ENCODE measurements at regions of chr14 and their contacts with region 1.

Region 1: GRCh38 chr14:70972107-70972976 is 65.1 kb downstream of the PCNX1 start:
- DNase-seq: peak; percentile 87
- H3K4me3 ChIP-seq: no peak overlapping the region
- H3K27ac ChIP-seq: no peak overlapping the region
- H3K4me1 ChIP-seq: no peaks in the 10 kb centered on the region
- H3K27me3 ChIP-seq: no peaks in the 10 kb centered on the region
- CTCF ChIP-seq: peak; percentile 87

Region 2: GRCh38 chr14:70821584-70822529 is 150.5 kb before region 1 on chr14:
- intact Hi-C with region 1: loop called (anchors 2 kb)
- DNase-seq: peak; percentile 45
- H3K4me3 ChIP-seq: peak overlapping the region; percentile 39
- H3K27ac ChIP-seq: no peak overlapping the region
- H3K4me1 ChIP-seq: peaks cover 8% of the 10 kb centered on the region
- H3K27me3 ChIP-seq: peaks cover 12% of the 10 kb centered on the region
- CTCF ChIP-seq: no peak

Region 3: GRCh38 chr14:70907176-70907995 is 65.0 kb before region 1 on chr14 and contains the start of gene PCNX1:
- intact Hi-C with region 1: loop called (anchors 5 kb)
- DNase-seq: peak; percentile 87
- H3K4me3 ChIP-seq: peak within 1 kb of the TSS; percentile 86
- H3K27ac ChIP-seq: peak within 1 kb of the TSS; percentile 94
- H3K4me1 ChIP-seq: peaks cover 4% of the 10 kb centered on the region
- H3K27me3 ChIP-seq: no peaks in the 10 kb centered on the region
- CTCF ChIP-seq: peak; percentile 91
- total RNA-seq, gene PCNX1: 18.1 to 26.7 TPM

Region 4: DNA sequence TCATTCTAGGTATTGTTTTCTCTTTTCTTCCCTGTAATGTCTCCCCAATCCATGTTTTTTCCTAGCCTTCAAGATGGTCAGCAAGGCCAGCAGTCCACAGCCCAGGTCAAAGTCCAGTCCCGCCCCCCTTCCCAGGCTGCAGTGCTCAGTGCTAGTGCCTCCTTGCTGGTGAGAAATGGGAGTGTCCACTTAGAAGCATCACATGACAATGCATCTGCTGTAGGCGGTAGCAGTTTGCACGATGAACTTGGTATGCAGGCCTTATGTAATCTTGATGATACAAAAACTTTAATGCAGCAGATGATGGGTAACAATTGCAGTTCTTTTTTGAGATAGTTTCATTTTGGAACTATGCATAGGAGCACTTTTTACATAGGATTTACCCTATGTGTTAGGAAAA is 23.3 kb after region 1 on chr14:
- intact Hi-C with region 1: no loop called
- DNase-seq: peak; percentile 46
- H3K4me3 ChIP-seq: no peak overlapping the region
- H3K27ac ChIP-seq: no peak overlapping the region
- H3K4me1 ChIP-seq: no peaks in the 10 kb centered on the region
- H3K27me3 ChIP-seq: no peaks in the 10 kb centered on the region
- CTCF ChIP-seq: no peak

Measured in colonic mucosa (tissue), 4 donors.